Activated B cell treated with CpG ODN at 0.5 μM for 24 hours (primary cell): ENCODE measurements at regions of chr20 and their contacts with region 1.

Region 1: DNA sequence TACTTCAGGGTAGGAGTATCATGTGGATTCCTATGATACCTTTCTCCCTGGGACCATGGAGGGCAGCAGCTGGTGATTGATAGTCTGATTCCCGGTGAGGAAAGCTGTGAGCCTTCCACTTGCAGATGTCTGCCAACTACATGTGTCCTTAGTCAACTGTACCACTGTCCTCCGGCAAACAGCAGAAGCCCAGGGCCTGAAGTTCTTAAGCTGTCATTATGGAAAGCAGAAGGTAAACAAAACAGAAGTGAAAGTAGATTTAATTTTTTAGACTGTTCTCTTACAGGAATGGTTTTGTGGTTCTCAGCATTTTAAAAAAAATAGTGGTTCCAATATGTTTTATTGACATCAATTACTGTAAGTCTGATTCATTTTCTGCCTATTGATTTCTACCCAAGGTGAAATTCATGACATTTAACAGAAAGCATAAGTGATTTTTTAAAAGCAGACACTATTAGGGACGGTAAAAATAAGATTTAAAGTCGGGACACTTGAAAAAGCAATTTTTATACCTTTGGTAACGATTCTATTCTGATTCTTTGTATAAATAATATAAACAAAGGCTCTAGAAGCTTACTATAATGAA is 36.6 kb downstream of the PTPN1 start:
- DNase-seq: no peak
- ATAC-seq: peak; percentile 78
- H3K4me3 Mint-ChIP-seq: peak overlapping the region; percentile 79
- H3K27ac Mint-ChIP-seq: peak overlapping the region; percentile 85
- H3K4me1 Mint-ChIP-seq: peaks cover 75% of the 10 kb centered on the region
- H3K27me3 Mint-ChIP-seq: no peaks in the 10 kb centered on the region
- CTCF ChIP-seq: no peak

Region 2: GRCh38 chr20:50478162-50479036 is 68.4 kb before region 1 on chr20:
- CTCF ChIA-PET with region 1: interaction called, 4 read pairs
- POLR2A ChIA-PET with region 1: interaction called, 5 read pairs
- intact Hi-C with region 1: loop called (anchors 1 kb)
- DNase-seq: peak; percentile 53
- ATAC-seq: peak; percentile 99
- H3K4me3 Mint-ChIP-seq: peak overlapping the region; percentile 1
- H3K27ac Mint-ChIP-seq: no peak overlapping the region
- H3K4me1 Mint-ChIP-seq: peaks cover 43% of the 10 kb centered on the region
- H3K27me3 Mint-ChIP-seq: no peaks in the 10 kb centered on the region
- CTCF ChIP-seq: peak; percentile 24

Region 3: GRCh38 chr20:50498081-50498776 is 48.6 kb before region 1 on chr20:
- CTCF ChIA-PET with region 1: interaction called, 3 read pairs
- POLR2A ChIA-PET with region 1: interaction called, 1,679 read pairs
- intact Hi-C with region 1: loop called (anchors 1 kb)
- DNase-seq: no peak
- ATAC-seq: peak; percentile 81
- H3K4me3 Mint-ChIP-seq: peak overlapping the region; percentile 71
- H3K27ac Mint-ChIP-seq: peak overlapping the region; percentile 99
- H3K4me1 Mint-ChIP-seq: peaks cover 49% of the 10 kb centered on the region
- H3K27me3 Mint-ChIP-seq: no peaks in the 10 kb centered on the region
- CTCF ChIP-seq: no peak

Region 4: GRCh38 chr20:50534567-50535551 is 12.0 kb before region 1 on chr20:
- CTCF ChIA-PET with region 1: interaction called, 3 read pairs
- POLR2A ChIA-PET with region 1: interaction called, 1,679 read pairs
- intact Hi-C with region 1: no loop called
- DNase-seq: no peak
- ATAC-seq: no peak
- H3K4me3 Mint-ChIP-seq: no peak overlapping the region
- H3K27ac Mint-ChIP-seq: peak overlapping the region; percentile 24
- H3K4me1 Mint-ChIP-seq: peaks cover 79% of the 10 kb centered on the region
- H3K27me3 Mint-ChIP-seq: no peaks in the 10 kb centered on the region
- CTCF ChIP-seq: no peak

Region 5: DNA sequence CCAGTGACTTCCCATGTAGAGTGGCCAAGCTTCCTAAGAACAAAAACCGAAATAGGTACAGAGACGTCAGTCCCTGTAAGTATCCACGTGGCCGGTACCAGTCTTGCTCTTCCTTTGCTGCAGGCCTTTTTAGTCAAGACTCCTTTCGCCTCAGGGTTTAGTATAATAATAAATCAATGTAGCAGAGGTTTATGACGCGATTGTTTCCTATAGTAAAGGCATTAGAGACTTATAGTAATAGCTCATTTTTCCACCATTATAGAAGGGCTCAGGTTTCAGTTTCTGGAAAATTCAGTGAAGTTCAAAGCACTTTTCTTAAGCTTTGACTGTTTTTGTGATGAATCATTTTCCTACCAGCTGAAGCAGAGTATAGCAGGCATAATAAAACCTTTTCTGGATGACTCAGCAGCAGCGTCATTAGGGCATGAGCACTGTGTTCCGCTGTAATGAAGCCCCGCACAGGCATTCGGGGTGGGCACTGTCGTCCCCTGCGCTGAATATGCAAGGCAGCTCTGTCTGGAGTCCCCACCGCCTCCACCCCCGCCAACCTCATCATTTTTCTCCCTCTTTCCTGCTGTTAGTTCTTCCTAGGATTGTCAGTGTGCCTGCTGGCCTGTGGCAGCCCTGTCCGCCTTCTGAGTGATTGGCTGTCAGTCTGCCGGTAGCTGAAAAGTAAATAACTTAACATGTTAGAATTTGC is 14.7 kb after region 1 on chr20:
- CTCF ChIA-PET with region 1: interaction called, 3 read pairs
- POLR2A ChIA-PET with region 1: interaction called, 15 read pairs
- intact Hi-C with region 1: loop called (anchors 2 kb)
- DNase-seq: no peak
- ATAC-seq: peak; percentile 78
- H3K4me3 Mint-ChIP-seq: peak overlapping the region; percentile 35
- H3K27ac Mint-ChIP-seq: peak overlapping the region; percentile 76
- H3K4me1 Mint-ChIP-seq: peaks cover 70% of the 10 kb centered on the region
- H3K27me3 Mint-ChIP-seq: no peaks in the 10 kb centered on the region
- CTCF ChIP-seq: no peak